CD4-positive, alpha-beta T cell (primary cell): ENCODE measurements at regions of chr1 and their contacts with region 1.

Region 1: DNA sequence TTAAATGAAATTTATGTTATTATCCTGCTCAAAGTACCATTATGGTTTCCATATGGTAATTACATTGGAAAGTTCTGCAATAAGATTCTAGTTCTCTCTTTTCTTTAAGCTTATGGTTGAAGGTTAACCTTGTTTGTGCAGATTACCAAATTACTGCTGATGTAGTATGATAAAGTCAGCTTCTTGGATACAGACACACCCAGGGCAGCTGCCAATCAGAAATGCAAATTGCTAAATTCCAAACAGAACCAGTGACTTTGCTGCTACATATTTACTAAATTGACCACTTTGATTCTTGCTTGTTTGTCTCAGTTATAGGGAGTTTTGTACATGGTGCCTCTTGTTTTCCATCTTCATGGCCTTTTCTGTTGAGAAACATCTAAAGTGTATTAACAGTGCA is 26.5 kb downstream of the GNAT2 start:
- DNase-seq: no peak
- ATAC-seq: no peak
- H3K4me3 ChIP-seq: no peak overlapping the region
- H3K4me3 Mint-ChIP-seq: no peak overlapping the region
- H3K27ac ChIP-seq: no peak overlapping the region
- H3K27ac Mint-ChIP-seq: no peak overlapping the region
- H3K4me1 ChIP-seq: no peaks in the 10 kb centered on the region
- H3K4me1 Mint-ChIP-seq: no peaks in the 10 kb centered on the region
- H3K27me3 ChIP-seq: no peaks in the 10 kb centered on the region
- H3K27me3 Mint-ChIP-seq: no peaks in the 10 kb centered on the region
- CTCF ChIP-seq: no peak

Region 2: GRCh38 chr1:109630081-109630897 is 37.4 kb after region 1 on chr1:
- CTCF ChIA-PET with region 1: no interaction called
- POLR2A ChIA-PET with region 1: no interaction called
- intact Hi-C with region 1: loop called in 1 of 2 experiments (anchors 5 kb)
- DNase-seq: peak in 11 of 14 experiments; percentile 26 to 69 (median 35)
- ATAC-seq: no peak
- H3K4me3 ChIP-seq: no peak overlapping the region
- H3K4me3 Mint-ChIP-seq: no peak overlapping the region
- H3K27ac ChIP-seq: no peak overlapping the region
- H3K27ac Mint-ChIP-seq: no peak overlapping the region
- H3K4me1 ChIP-seq: peaks cover 9% of the 10 kb centered on the region
- H3K4me1 Mint-ChIP-seq: peaks cover 21% of the 10 kb centered on the region
- H3K27me3 ChIP-seq: no peaks in the 10 kb centered on the region
- H3K27me3 Mint-ChIP-seq: no peaks in the 10 kb centered on the region
- CTCF ChIP-seq: peak; percentile 24